Activated T-helper 2 cell treated with anti-CD3 and anti-CD28 coated beads, Interferon-gamma antibody, Interleukin-2, Interleukin-4, amounts not matched to agents 10 μg/mL and 5 μg/mL and 100 μg/mL, durations not matched to agents 14 hours and 24 hours and 36 hours (primary cell): ENCODE measurements at regions of chr3 and their contacts with region 1.

Region 1: GRCh38 chr3:187738331-187739093 is 6.8 kb downstream of the BCL6 start:
- DNase-seq: peak; percentile 69
- H3K4me3 Mint-ChIP-seq: peak overlapping the region; percentile 94
- H3K27ac Mint-ChIP-seq: peak overlapping the region; percentile 70
- H3K4me1 Mint-ChIP-seq: peaks cover 38% of the 10 kb centered on the region
- H3K27me3 Mint-ChIP-seq: peaks cover 12% of the 10 kb centered on the region

Region 2: DNA sequence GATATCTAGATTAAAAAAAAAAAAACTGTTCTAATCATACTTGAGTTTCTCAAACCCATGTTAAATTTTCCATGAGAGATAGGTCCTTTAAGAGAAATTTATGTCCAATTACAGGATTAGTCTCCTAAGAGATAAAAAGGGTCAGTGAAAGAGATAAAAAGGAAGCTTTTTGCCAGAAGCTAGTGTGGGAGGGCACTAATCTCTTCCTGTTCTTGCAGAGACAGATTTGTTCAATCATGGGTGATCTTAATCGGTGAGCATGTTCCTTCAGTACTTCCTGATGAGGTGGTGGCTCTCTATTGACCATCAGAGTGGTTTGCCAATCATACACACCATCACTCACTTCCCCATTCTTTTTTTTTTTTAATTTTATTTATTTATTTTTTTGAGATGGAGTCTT is 398.5 kb after region 1 on chr3:
- intact Hi-C with region 1: no loop called
- DNase-seq: no peak
- H3K4me3 Mint-ChIP-seq: no peak overlapping the region
- H3K27ac Mint-ChIP-seq: no peak overlapping the region
- H3K4me1 Mint-ChIP-seq: peaks cover 18% of the 10 kb centered on the region
- H3K27me3 Mint-ChIP-seq: peaks cover 11% of the 10 kb centered on the region

Region 3: DNA sequence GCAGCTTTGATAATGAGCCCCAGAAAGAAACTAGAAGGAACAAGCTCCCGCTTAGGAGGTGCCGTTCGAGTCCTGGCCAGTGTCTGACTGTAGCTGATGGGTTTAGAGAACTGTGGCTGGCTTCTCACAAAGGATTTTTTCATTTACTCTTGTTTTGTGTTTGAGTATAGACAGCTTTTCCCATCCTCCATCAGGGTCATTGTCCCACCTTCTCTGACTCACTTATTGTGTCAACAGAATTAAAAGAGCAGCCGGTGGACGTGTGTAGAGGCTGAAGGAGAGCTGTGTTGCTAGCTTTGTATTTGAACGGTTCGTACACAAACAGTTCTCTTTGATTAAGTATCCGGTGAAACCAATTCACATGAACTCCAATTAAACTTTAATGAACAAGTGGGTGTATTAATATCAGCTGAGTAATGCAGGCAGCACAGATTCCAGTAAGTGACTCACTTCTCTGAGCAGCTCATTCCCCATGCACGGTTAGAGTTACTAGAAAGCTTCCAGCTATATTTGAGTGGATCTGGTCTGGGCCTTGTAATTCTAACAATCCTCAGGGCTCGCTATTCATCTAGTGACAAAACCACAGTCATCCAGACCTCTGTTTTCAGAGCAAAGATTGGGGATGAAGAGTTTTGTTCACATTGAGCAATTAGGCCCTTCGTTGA is 556.4 kb after region 1 on chr3:
- intact Hi-C with region 1: loop called (anchors 2 kb)
- DNase-seq: no peak
- H3K4me3 Mint-ChIP-seq: no peak overlapping the region
- H3K27ac Mint-ChIP-seq: no peak overlapping the region
- H3K4me1 Mint-ChIP-seq: peaks cover 66% of the 10 kb centered on the region
- H3K27me3 Mint-ChIP-seq: no peaks in the 10 kb centered on the region

Region 4: GRCh38 chr3:188439080-188439479 is 700.6 kb after region 1 on chr3:
- intact Hi-C with region 1: loop called (anchors 5 kb)
- DNase-seq: peak; percentile 15
- H3K4me3 Mint-ChIP-seq: peak overlapping the region; percentile 45
- H3K27ac Mint-ChIP-seq: peak overlapping the region; percentile 79
- H3K4me1 Mint-ChIP-seq: peaks cover 47% of the 10 kb centered on the region
- H3K27me3 Mint-ChIP-seq: no peaks in the 10 kb centered on the region

Region 5: DNA sequence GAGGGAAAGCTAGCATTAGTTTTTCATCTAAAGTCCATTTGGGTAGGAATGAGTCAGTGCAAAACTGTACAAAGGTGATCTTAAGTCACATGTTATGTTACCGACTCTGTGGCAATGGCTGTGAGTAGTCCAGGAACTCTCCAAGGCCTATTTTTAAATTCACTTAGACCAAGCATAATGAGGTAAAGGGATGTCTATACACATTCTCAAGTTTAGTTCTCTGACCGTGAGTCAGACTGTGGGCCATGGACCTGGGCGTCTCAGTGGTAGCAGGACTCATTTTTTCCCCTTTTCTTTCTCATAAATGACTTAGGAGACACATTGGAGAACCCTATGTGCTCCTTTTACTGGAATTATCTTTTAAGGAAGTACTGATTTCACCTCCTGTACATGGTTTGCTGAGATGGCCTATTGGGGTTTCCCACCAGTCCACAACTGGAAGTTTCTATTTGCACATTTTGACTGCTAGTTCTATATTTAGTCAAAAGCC is 944.6 kb after region 1 on chr3:
- intact Hi-C with region 1: loop called (anchors 5 kb)
- DNase-seq: no peak
- H3K4me3 Mint-ChIP-seq: no peak overlapping the region
- H3K27ac Mint-ChIP-seq: peak overlapping the region; percentile 78
- H3K4me1 Mint-ChIP-seq: peaks cover 41% of the 10 kb centered on the region
- H3K27me3 Mint-ChIP-seq: no peaks in the 10 kb centered on the region

Region 6: GRCh38 chr3:188954590-188955208 is 1216.2 kb after region 1 on chr3:
- intact Hi-C with region 1: loop called (anchors 1 kb)
- DNase-seq: peak; percentile 60
- H3K4me3 Mint-ChIP-seq: no peak overlapping the region
- H3K27ac Mint-ChIP-seq: no peak overlapping the region
- H3K4me1 Mint-ChIP-seq: peaks cover 32% of the 10 kb centered on the region
- H3K27me3 Mint-ChIP-seq: peaks cover 3% of the 10 kb centered on the region

Region 7: GRCh38 chr3:189233225-189233858 is 1494.8 kb after region 1 on chr3:
- intact Hi-C with region 1: loop called (anchors 2 kb)
- DNase-seq: no peak
- H3K4me3 Mint-ChIP-seq: no peak overlapping the region
- H3K27ac Mint-ChIP-seq: no peak overlapping the region
- H3K4me1 Mint-ChIP-seq: peaks cover 48% of the 10 kb centered on the region
- H3K27me3 Mint-ChIP-seq: peaks cover 18% of the 10 kb centered on the region